ENCODE measurements at regions of chr18 and their contacts with region 1.

Region 1: GRCh38 chr18:9102508-9103375 is at the start of gene NDUFV2:
- H3K4me3 ChIP-seq: peak within 1 kb of the TSS; percentile 56
- H3K27ac ChIP-seq: peak within 1 kb of the TSS; percentile 86
- H3K4me1 ChIP-seq: peaks cover 32% of the 10 kb centered on the region; the same call in 1 of the 2 replicates
- CTCF ChIP-seq: peak; percentile 40; the same call in 1 of the 2 replicates

Region 2: DNA sequence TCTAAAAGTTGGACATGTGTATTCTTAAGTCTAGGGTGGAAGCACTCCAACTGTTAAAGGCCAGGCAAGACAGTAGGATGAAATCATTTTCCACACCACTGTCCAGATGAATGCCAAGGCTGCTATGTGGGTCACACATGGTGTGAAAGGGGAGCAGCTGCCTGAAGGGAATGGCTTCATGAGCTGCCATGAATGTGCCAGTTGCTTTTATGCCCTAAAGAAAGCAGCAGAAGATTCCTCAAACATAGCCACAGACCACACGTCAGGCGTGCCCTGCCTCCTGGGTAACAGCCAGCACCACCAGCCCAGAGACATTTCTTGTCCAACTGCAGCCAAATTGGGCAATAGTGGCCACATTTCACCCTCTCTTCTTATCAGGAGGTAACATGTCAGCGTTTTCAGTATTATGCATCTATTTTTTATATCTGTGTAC is 267.2 kb before region 1 on chr18:
- CTCF ChIA-PET with region 1: no interaction called
- POLR2A ChIA-PET with region 1: no interaction called
- H3K4me3 ChIP-seq: no peak overlapping the region
- H3K27ac ChIP-seq: no peak overlapping the region
- H3K4me1 ChIP-seq: no peaks in the 10 kb centered on the region
- CTCF ChIP-seq: no peak

Region 3: GRCh38 chr18:9117980-9118841 is 15.5 kb after region 1 on chr18:
- CTCF ChIA-PET with region 1: interaction called, 6 read pairs
- POLR2A ChIA-PET with region 1: interaction called, 13 read pairs
- H3K4me3 ChIP-seq: no peak overlapping the region
- H3K27ac ChIP-seq: no peak overlapping the region
- H3K4me1 ChIP-seq: peaks cover 3% of the 10 kb centered on the region; the same call in 1 of the 2 replicates
- CTCF ChIP-seq: no peak